BJ (cell line): ENCODE measurements at regions of chr19 and their contacts with region 1.

Region 1: DNA sequence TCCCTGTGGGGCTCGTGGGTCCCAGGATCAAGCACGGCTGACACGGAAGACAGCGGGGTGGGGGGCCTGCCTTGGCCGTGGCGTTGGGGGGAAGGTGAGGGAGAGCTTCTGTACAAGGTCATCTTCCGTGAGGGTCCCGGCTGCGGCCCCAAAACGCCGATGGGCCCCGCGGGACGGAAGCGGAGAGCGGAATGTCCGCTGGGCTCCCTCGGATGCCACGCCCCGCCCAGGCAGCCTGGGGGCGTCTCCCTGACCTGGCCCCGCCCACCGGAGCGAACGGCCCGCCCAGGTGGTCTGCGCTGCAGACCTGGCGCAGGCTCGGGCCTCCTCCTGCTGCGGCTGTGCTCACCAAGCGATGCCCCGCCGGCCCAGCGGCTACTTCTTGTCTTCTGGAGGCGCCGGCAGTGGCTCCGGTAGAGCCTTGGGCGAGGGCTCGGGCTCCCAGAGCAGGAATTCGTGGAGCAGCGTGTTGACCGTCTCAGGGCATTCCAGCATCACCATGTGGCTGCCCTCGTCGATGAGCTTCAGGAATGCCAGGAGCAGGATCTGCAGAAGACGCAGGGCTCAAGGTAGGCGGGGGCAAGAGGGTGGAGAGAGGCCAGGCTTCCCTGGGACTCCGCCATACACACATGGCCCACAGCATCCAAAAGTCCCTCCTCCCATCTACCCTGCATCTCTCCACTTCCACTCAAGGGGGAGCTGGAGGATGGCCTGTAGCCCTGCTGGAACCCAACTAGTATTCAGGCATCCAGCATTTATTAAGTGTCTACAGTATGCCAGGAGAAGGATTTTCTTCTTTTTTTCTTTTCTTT is 10.7 kb downstream of the ABHD8 start:
- DNase-seq: peak; percentile 39
- H3K4me3 ChIP-seq: peak overlapping the region; percentile 58
- H3K27me3 ChIP-seq: no peaks in the 10 kb centered on the region
- CTCF ChIP-seq: peak; percentile 80

Region 2: DNA sequence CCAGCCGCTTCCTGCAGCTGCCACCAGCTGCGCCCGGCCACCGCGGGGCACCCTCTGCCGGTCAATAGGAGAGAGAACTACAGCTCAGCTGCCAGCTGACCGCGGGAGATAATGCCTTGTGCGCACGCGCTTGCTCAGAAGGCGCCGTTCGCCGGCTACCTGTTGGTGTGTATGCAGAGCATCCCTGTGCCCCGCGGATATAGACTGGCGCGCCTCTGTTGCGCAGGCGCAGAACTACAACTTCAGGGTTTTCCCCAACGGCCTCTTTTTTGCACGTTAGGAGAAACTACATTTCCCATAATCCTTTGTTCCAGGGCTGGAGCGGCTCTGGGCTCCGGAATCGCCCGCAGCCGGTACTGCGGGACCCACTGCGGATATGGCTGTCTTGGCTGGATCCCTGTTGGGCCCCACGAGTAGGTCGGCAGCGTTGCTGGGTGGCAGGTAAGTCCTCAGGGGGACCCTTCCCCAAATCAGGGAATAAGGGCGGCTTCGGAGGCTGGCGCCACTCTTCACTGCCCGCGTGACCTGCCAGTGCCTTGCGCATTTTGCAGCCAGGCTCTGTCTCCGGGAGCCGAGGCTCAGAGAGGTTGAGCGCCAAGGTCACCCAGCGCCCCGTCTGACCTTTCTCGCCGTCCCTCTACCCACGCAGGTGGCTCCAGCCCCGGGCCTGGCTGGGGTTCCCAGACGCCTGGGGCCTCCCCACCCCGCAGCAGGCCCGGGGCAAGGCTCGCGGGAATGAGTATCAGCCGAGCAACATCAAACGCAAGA is 13.2 kb after region 1 on chr19 and contains the start of gene MRPL34:
- CTCF ChIA-PET with region 1: interaction called, 52 read pairs
- POLR2A ChIA-PET with region 1: no interaction called
- DNase-seq: peak; percentile 94
- H3K4me3 ChIP-seq: peak within 1 kb of the TSS; percentile 79
- H3K27me3 ChIP-seq: no peaks in the 10 kb centered on the region
- CTCF ChIP-seq: peak; percentile 92
- polyA plus RNA-seq, gene MRPL34: 19.9 and 26.3 TPM in 2 replicates

Region 3: DNA sequence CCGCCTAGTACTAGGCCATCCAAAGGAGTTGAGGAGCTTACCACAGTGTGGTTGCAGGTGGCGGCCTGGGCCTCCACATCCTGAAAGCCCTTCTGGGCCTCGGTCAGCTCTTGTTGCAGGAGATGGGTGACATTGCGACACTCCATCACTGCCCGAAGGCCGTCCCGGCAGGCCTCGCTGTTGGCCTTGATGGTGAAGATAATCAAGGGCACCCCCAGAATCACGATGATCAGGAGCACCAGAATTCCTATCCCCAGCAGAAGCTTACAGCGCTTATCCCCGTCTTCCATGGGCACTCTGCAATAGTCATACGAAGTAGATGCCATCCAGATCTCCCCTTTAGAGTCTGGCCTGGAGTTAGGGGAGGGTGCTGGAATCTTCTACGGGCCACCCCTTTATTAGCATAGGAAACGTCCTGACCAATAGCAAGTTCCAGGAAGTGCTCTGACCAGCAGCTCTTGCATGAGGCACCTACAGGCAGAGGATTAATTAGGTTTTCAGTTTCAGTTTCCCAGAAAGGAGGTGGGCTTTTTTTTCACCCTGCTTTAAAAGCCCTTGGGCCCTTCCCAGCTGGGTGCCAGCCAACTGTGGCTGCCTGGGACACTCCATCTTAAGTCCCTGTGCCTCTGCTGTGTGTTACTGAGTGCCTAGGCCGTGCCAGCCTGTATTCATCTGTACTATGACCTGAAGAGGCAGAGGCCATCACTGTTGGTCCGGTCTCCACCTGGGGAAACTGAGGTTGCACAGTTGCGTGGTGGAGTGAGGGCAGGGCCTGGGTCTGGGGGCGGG is 113.0 kb after region 1 on chr19 and contains the start of gene BST2:
- CTCF ChIA-PET with region 1: no interaction called
- POLR2A ChIA-PET with region 1: no interaction called
- DNase-seq: no peak
- H3K4me3 ChIP-seq: no peak within 1 kb of the TSS
- H3K27me3 ChIP-seq: no peaks in the 10 kb centered on the region
- CTCF ChIP-seq: no peak
- polyA plus RNA-seq, gene BST2: 4.5 and 6.4 TPM in 2 replicates